ENCODE measurements at regions of chr6 and their contacts with region 1.

Region 1: GRCh38 chr6:116111552-116112528 is 11.2 kb downstream of the NT5DC1 start:
- DNase-seq: peak; percentile 49
- ATAC-seq: peak; percentile 96
- H3K4me3 ChIP-seq: no peak overlapping the region
- H3K27ac ChIP-seq: no peak overlapping the region
- H3K4me1 ChIP-seq: no peaks in the 10 kb centered on the region
- H3K27me3 ChIP-seq: no peaks in the 10 kb centered on the region
- CTCF ChIP-seq: peak; percentile 43 to 84 (median 83); a peak in 5 of 6 replicates
- POLR2A ChIP-seq: no peak
- RAD21 ChIP-seq: peak; percentile 55

Region 2: GRCh38 chr6:115404446-115404845 is 707.4 kb before region 1 on chr6:
- CTCF ChIA-PET with region 1: no interaction called
- POLR2A ChIA-PET with region 1: no interaction called
- RAD21 ChIA-PET with region 1: no interaction called
- intact Hi-C with region 1: no loop called
- DNase-seq: no peak
- ATAC-seq: no peak
- H3K4me3 ChIP-seq: no peak overlapping the region
- H3K27ac ChIP-seq: no peak overlapping the region
- H3K4me1 ChIP-seq: no peaks in the 10 kb centered on the region
- H3K27me3 ChIP-seq: no peaks in the 10 kb centered on the region
- CTCF ChIP-seq: no peak
- POLR2A ChIP-seq: no peak
- RAD21 ChIP-seq: no peak

Region 3: GRCh38 chr6:116010790-116011401 is 100.9 kb before region 1 on chr6:
- CTCF ChIA-PET with region 1: interaction called, 10 read pairs
- POLR2A ChIA-PET with region 1: no interaction called
- RAD21 ChIA-PET with region 1: no interaction called
- intact Hi-C with region 1: no loop called
- DNase-seq: peak; percentile 67
- ATAC-seq: peak; percentile 78
- H3K4me3 ChIP-seq: peak overlapping the region in 1 of 2 experiments; percentile 6; a peak in 1 of 4 replicates
- H3K27ac ChIP-seq: peak overlapping the region; percentile 21; the same call in 1 of the 2 replicates
- H3K4me1 ChIP-seq: peaks cover 16 to 32% of the 10 kb centered on the region in 2 experiments
- H3K27me3 ChIP-seq: no peaks in the 10 kb centered on the region
- CTCF ChIP-seq: peak; percentile 73 to 79 (median 76); a peak in 5 of 6 replicates
- POLR2A ChIP-seq: no peak
- RAD21 ChIP-seq: peak; percentile 83

Region 4: DNA sequence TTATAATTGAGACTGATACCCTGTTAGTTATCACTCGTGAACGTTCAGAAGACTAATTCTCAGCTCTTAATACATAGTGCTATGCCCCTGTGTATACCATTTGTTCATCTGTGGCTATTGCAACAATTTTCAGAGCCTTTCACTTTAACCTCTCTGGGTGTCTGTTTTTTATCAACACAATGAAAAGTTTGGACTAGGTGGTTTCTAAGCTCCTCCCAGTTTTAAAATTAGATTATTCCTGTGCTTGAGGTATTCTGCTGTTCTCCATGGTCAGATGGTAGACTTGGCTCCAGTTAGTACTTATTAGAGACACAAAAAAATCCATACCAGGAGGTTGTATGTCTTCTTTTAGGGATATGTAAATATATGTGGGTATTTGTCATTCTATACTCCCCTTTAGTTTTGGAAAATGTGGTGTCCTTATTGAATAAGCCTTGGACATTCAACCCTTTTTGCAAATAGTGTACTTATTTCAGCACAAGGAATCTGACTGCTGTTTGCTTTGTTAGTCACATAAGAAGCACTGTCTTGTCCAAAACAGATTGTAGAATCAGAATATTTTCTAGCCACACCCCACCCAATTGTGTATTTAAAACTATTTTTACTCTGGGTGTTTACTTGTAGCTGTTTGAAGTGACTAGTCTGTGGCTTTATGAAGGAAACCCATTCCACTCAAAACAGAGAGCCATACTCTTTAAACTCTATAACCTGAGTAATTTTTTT is 16.1 kb after region 1 on chr6:
- CTCF ChIA-PET with region 1: interaction called, 11 read pairs
- POLR2A ChIA-PET with region 1: no interaction called
- RAD21 ChIA-PET with region 1: no interaction called
- intact Hi-C with region 1: no loop called
- DNase-seq: no peak
- ATAC-seq: no peak
- H3K4me3 ChIP-seq: no peak overlapping the region
- H3K27ac ChIP-seq: no peak overlapping the region
- H3K4me1 ChIP-seq: no peaks in the 10 kb centered on the region
- H3K27me3 ChIP-seq: no peaks in the 10 kb centered on the region
- CTCF ChIP-seq: no peak
- POLR2A ChIP-seq: no peak
- RAD21 ChIP-seq: no peak

Measured in HCT116 (cell line).